ENCODE measurements at regions of chr10 and their contacts with region 1.

Region 1: DNA sequence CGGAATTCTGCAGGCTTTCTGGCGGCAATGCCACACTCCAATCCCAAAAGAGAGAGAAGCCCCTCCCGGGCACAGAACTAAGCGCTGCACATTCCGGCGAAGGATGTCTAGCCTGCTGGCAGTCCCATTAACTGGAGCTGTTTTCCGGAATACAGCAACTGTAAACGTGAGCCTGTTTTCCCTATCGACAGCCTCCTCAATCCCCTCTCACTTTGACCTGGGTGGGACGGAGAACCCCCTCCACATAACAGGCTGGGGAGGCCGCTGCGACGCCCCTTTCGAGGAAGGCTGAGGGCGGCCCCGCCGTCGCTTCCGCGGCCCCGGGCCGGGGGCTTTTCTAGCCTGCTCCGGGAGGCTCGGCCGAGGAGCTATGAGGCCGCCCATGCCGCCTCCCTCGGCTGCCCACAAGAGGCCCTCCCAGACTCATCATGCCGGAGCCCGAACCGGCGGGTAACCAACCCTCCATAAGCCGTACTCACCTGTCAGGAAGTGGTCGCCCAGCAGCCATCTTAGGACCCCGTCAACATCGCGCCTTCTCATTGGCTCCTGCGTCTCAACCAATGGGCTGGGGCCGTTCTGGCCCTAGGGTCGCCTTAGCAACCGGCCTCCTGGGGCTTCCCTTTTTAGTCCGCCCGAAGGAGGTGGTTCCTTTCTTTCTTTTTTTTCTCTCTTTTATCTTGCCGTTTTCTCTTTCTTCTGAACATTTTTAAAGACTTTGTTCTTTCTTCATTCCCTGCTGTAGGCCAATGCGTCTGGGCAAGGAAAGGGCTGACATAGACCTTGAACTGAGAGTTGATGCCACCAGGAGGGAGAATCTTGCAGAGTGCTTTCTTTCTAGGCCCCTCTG is at the start of gene FAM204A:
- DNase-seq: peak; percentile 88
- ATAC-seq: peak; percentile 98
- H3K4me3 ChIP-seq: peak within 1 kb of the TSS; percentile 86
- H3K27ac ChIP-seq: no peak within 1 kb of the TSS
- H3K4me1 ChIP-seq: peaks cover 16% of the 10 kb centered on the region; the same call in 1 of the 2 replicates
- H3K27me3 ChIP-seq: 0 out of 2 replicates have a peak, but pooled peaks cover 3% of the 10 kb centered on the region
- CTCF ChIP-seq: no peak
- total RNA-seq, gene FAM204A: 27.3 and 34.2 TPM in 2 replicates

Region 2: DNA sequence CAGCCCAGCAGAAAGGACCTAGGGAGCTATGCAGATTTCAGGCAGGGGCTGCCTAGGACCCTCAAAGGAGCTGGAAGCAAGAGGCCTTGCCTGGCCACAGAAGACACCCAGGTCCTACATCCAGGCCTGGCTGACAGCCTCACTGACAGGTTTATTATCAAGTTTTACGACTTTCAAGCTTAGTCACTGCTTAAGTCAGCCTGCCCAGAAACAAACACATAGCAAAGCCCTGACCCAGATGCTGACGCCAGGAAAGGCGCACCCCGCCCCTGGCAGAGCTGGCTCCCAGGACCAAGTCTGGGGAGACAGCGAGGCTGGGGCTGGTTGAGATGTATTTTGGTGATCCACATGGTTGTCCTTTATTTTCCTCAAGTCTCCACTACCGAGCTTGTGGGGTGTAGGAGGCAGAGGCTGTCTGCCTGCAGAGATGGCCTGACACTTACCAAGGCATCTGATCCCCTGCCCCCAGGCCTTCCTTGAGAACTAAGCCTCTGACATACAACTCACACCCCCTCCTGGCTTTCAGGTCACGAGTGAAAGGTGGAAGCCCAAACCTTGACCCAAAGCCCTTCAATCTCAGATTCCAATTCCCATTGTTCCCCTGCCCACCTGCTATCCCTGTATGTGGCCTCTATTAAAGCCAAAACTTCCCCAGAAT is 880.1 kb before region 1 on chr10:
- CTCF ChIA-PET with region 1: no interaction called
- POLR2A ChIA-PET with region 1: no interaction called
- intact Hi-C with region 1: loop called (anchors 5 kb)
- DNase-seq: peak; percentile 91
- ATAC-seq: peak; percentile 95
- H3K4me3 ChIP-seq: no peak overlapping the region
- H3K27ac ChIP-seq: peak overlapping the region; percentile 90
- H3K4me1 ChIP-seq: peaks cover 31% of the 10 kb centered on the region
- H3K27me3 ChIP-seq: no peaks in the 10 kb centered on the region
- CTCF ChIP-seq: no peak

Region 3: GRCh38 chr10:118300320-118300719 is 41.7 kb before region 1 on chr10:
- CTCF ChIA-PET with region 1: no interaction called
- POLR2A ChIA-PET with region 1: no interaction called
- intact Hi-C with region 1: loop called (anchors 5 kb)
- DNase-seq: peak; percentile 62
- ATAC-seq: peak; percentile 78
- H3K4me3 ChIP-seq: no peak overlapping the region
- H3K27ac ChIP-seq: no peak overlapping the region
- H3K4me1 ChIP-seq: peaks cover 19% of the 10 kb centered on the region; the same call in 1 of the 2 replicates
- H3K27me3 ChIP-seq: no peaks in the 10 kb centered on the region
- CTCF ChIP-seq: no peak

Region 4: DNA sequence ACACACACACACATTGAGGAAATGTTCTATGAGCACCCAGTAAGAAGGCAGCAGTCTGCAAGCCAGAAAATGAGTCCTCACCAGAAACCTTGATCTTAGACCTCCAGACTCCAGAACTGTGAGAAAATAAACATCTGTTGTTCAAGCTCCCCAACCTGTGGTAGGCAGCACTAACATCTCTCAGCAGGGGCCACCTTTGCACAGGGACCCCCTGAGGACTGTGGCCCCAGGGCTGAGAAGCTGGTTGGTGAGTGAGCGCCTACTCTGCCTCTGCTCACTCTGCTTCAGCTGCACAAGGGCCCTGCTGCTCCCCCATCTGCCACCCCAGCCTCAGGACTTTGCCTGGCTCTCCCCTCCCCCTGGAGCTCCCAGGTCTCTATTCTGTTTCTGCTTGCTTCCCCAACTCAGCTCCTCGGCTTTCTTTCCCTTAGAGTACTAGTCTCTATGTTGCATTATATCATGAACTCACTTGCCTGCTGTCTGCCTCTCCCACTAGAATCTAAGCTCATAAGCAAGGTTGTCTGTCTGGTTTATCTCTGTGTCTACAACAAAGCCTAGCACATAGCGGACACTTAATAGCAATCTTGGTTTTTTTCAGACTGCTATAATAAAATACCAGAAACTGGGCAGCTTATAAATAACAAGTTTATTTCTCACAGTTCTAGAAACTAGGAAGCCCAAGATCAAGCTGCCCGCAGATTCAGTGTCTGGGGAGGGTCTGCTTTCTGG is 293.8 kb after region 1 on chr10:
- CTCF ChIA-PET with region 1: no interaction called
- POLR2A ChIA-PET with region 1: no interaction called
- intact Hi-C with region 1: no loop called
- DNase-seq: no peak
- ATAC-seq: no peak
- H3K4me3 ChIP-seq: no peak overlapping the region
- H3K27ac ChIP-seq: no peak overlapping the region
- H3K4me1 ChIP-seq: no peaks in the 10 kb centered on the region
- H3K27me3 ChIP-seq: peaks cover 32% of the 10 kb centered on the region; the same call in 1 of the 2 replicates
- CTCF ChIP-seq: no peak

Measured in PC-3 (cell line).